Activated T-helper 1 cell treated with anti-CD3 and anti-CD28 coated beads, Interleukin-12 subunit alpha, Interleukin-12 subunit beta, Interleukin-2, Interleukin-4 antibody, amounts not matched to agents 30 ng/mL and 10 ng/mL and 1 ng/mL, durations not matched to agents 14 hours and 24 hours and 36 hours (primary cell): ENCODE measurements at regions of chr13 and their contacts with region 1.

Region 1: GRCh38 chr13:46387064-46387851 is at the start of gene RUBCNL:
- DNase-seq: peak; percentile 13
- H3K4me3 Mint-ChIP-seq: peak within 1 kb of the TSS; percentile 87
- H3K27ac Mint-ChIP-seq: peak within 1 kb of the TSS; percentile 15
- H3K4me1 Mint-ChIP-seq: peaks cover 40% of the 10 kb centered on the region
- H3K27me3 Mint-ChIP-seq: peaks cover 23% of the 10 kb centered on the region
- total RNA-seq, gene RUBCNL: 1.2 and 2.8 TPM in 2 replicates

Region 2: DNA sequence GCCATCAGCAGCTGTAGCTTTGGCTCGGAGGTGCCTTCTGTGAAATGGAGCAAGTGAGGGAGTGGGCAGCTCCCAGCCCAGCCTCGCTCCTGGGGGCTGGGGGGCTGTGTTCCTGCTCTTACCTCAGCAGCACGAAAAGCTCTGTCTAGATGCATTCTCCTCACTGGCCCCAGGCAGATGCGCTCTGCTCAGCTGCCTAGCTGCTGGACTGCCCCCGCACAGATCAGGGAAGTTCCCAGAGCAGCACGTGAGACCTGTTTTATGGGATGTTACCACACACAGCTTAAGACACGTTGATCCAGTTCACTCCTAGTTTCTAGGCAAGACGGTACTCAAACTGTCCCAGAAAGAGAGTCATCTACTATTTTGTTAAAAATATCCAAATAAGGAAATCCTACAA is 218.9 kb before region 1 on chr13:
- intact Hi-C with region 1: loop called (anchors 5 kb)
- DNase-seq: no peak
- H3K4me3 Mint-ChIP-seq: peak overlapping the region; percentile 79
- H3K27ac Mint-ChIP-seq: peak overlapping the region; percentile 89
- H3K4me1 Mint-ChIP-seq: peaks cover 92% of the 10 kb centered on the region
- H3K27me3 Mint-ChIP-seq: no peaks in the 10 kb centered on the region

Region 3: DNA sequence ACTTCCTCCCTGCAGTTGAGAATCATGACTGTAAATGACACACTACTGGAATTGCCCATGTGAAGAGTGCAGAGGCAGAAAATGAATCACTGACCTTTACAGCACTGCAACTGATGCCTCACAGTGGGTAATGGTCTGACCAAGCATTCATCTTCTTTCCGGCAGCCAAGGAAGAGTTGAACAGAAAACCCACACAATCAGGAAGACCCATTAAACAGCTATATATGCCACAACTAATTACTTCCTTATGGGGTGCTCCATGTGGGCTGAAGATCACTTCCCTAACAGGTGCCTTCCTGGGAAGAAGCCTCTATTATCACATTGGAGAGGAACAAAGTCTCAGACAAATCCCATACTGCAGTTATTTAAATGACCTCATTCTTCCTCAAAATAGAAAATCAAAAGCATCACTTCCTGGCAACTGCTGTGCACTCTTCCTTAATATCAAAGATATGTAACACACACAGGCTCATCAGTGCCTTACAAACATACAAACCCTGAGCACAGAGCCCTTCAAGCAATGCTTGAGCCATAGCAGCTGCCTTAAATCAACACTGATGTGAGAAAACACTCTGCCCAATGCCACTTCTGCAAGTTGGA is 46.0 kb before region 1 on chr13:
- intact Hi-C with region 1: loop called (anchors 1 kb)
- DNase-seq: no peak
- H3K4me3 Mint-ChIP-seq: peak overlapping the region; percentile 60
- H3K27ac Mint-ChIP-seq: peak overlapping the region; percentile 97
- H3K4me1 Mint-ChIP-seq: peaks cover 48% of the 10 kb centered on the region
- H3K27me3 Mint-ChIP-seq: no peaks in the 10 kb centered on the region

Region 4: DNA sequence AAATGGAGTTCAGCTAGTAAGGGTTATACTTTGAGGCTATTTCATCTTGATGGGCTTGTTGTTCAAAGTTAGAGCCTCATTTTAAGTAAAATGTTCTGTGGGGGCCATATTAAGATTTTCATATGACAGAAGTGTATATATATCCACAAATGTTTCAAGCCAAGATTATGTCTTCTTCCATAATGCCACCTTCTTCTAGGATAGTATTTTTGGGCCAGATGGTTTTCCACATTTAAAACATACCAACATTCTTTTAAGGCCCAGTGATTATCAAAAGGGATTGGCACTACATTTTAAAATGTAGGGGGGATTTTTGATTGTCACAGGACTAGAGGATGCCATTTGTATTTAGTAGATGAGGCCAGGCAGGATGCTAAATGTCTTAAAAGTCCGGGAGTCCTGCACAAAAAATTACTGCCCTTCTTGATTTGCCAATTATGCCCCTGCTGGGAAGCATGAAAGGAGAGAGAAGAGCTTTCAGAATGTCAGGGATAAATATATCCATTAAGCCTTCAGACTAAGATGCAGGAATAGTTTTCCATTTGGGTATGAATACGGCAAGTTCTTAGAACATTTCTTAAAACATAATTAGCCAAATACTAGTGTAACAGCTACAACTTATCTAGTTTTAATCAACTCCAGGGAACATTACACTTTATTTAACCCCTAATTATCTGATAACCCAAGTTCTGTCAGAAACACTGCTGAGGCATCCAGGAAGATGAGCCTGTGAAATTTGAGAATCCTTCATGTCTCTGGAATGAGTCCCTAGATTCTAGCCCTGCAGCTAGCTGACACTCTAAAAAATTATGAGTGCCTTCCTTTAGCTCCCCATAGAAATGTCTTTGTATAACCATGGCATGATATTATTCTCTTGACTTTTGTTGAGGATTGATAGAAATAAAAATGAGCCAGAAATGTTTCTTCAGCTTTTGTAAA is 1879.7 kb after region 1 on chr13:
- intact Hi-C with region 1: no loop called
- DNase-seq: no peak
- H3K4me3 Mint-ChIP-seq: no peak overlapping the region
- H3K27ac Mint-ChIP-seq: no peak overlapping the region
- H3K4me1 Mint-ChIP-seq: peaks cover 24% of the 10 kb centered on the region
- H3K27me3 Mint-ChIP-seq: no peaks in the 10 kb centered on the region